ENCODE measurements at regions of chr15 and their contacts with region 1.

Region 1: DNA sequence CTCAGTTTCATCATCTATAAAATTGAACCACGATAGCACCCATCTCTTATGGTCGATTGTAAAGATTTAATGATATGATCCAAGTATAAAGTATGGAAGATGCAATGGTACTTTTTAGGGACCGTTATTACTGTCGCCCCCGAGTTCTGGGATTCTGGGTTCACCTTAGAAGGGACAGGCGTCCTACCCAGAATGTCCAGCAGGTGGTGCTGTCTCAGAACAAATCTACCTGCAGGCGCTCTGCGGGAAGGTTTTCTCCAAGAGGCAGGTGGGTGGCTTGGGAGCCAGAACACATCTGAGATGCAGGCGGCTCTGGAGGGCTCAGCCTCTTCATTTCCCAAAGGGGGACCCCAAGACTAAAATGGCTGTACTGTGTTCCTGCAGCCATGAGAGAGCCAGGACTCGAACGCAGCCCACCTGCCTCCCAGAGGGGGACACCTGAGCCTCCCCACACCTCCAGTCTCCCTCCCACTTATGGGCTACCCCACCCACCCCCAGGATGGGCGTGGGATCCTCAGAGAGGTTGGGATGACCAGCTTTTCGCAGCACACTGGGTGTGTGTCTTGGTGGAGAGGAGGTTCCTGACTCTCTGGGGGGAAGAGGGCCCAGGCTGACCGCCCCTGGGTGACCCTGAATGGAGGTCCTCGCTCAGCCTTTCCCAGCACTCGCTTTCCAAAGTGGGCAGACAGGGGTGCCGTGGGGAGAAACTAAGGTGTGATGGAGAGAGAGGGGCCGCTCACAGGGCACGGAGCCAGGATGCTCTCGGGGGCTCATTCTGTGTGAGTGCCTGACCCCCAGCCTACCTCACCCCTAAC is 28.1 kb upstream of the CORO2B start:
- DNase-seq: peak; percentile 80
- ATAC-seq: peak; percentile 58
- H3K4me3 ChIP-seq: no peak overlapping the region
- H3K4me3 Mint-ChIP-seq: no peak overlapping the region
- H3K27ac ChIP-seq: no peak overlapping the region
- H3K27ac Mint-ChIP-seq: no peak overlapping the region
- H3K4me1 ChIP-seq: no peaks in the 10 kb centered on the region
- H3K4me1 Mint-ChIP-seq: no peaks in the 10 kb centered on the region
- H3K27me3 ChIP-seq: peaks cover 0 to 25% (median 12%) of the 10 kb centered on the region in 4 experiments
- H3K27me3 Mint-ChIP-seq: peaks cover 46% of the 10 kb centered on the region
- CTCF ChIP-seq: peak; percentile 92

Region 2: DNA sequence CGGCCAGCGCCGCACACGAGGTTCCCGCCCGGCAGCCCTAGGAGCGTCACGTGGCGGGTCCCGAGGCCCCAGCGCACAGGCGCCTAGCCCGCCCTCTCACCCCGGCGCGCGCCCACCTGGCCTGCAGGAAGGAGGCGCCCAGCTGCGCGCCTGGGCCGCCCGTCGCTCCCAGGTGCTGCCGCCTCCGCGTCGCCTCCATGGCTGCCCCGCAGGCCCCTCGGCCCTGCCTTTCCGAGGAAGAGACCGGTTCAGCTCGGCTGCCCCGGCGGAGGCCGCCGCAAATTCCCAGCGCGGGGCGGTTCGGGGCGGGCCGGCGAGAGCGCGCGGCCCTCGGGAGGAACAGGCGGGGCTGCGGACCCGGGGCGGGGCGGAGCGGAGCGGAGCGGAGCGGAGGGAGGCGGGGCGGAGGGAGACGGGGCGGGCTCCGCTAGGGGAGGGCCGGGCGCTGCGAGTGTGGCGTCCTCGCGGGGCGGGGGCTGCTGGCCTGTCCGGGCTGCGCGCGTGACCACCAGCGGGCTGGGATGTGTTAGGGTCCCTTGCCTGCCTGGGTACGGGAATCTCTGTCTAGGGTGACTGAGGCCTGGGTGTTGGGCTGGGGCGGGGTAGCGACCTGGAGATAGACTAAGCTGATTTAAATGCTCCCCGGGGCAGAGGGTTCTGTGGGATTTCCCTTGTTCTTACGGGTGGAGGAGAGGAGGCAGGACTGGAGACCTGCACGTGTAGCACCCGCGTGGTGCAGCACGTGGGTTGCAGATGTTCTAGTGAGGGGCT is 321.1 kb before region 1 on chr15 and contains the start of gene CLN6:
- CTCF ChIA-PET with region 1: no interaction called
- POLR2A ChIA-PET with region 1: no interaction called
- intact Hi-C with region 1: no loop called
- DNase-seq: peak; percentile 93
- ATAC-seq: peak; percentile 87
- H3K4me3 ChIP-seq: peak within 1 kb of the TSS; percentile 57 to 76 (median 73)
- H3K4me3 Mint-ChIP-seq: peak within 1 kb of the TSS; percentile 96
- H3K27ac ChIP-seq: peak within 1 kb of the TSS; percentile 60 to 88
- H3K27ac Mint-ChIP-seq: peak within 1 kb of the TSS; percentile 92
- H3K4me1 ChIP-seq: peaks cover 23 to 42% of the 10 kb centered on the region in 2 donors
- H3K4me1 Mint-ChIP-seq: peaks cover 45% of the 10 kb centered on the region
- H3K27me3 ChIP-seq: peaks cover 0 to 2% (median 0%) of the 10 kb centered on the region in 4 experiments
- H3K27me3 Mint-ChIP-seq: no peaks in the 10 kb centered on the region
- CTCF ChIP-seq: no peak
- total RNA-seq, gene CLN6: 22.8 and 31.5 TPM in 2 replicates

Region 3: DNA sequence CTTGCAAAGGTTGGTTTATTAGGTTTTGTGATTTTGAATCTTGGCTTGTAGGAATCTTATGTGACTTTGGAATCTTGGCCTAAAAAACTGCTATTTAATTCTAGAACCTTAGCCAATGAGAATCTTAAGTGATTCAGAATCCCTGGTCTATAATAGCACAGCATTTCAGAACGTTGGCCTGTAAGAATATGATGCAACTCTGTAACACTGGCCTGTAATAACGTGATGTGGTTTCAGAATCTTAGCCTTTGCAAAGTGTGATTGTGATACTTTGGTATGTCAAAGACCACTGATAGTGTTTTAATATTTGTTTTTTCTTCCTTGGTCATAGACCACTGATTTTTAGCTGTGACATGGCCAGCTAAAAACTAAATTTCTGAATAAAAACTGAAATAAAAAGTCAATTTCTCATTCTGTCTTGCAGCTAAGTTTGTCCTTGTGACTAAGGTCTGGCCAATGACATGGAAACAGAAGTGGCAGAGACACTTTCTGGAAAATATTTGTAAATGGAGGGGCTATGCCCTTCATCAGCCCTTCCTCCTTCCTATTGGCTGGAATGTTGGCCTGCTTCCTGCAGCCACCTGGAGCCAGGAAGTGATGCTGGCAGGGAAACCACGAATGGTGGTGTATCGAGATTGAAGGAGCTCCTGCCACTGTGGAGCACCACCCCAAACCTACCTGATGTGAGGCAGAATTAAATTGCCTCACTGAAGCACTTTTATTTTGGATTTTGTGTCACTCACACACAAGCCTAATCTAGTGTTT is 14.2 kb before region 1 on chr15:
- CTCF ChIA-PET with region 1: interaction called, 24 read pairs
- POLR2A ChIA-PET with region 1: no interaction called
- intact Hi-C with region 1: no loop called
- DNase-seq: no peak
- ATAC-seq: no peak
- H3K4me3 ChIP-seq: no peak overlapping the region
- H3K4me3 Mint-ChIP-seq: no peak overlapping the region
- H3K27ac ChIP-seq: no peak overlapping the region
- H3K27ac Mint-ChIP-seq: no peak overlapping the region
- H3K4me1 ChIP-seq: no peaks in the 10 kb centered on the region
- H3K4me1 Mint-ChIP-seq: no peaks in the 10 kb centered on the region
- H3K27me3 ChIP-seq: peaks cover 0 to 3% (median 0%) of the 10 kb centered on the region in 4 experiments
- H3K27me3 Mint-ChIP-seq: no peaks in the 10 kb centered on the region
- CTCF ChIP-seq: no peak

Region 4: GRCh38 chr15:68783226-68784058 is 232.8 kb after region 1 on chr15:
- CTCF ChIA-PET with region 1: interaction called, 11 read pairs
- POLR2A ChIA-PET with region 1: no interaction called
- intact Hi-C with region 1: loop called (anchors 2 kb)
- DNase-seq: peak; percentile 74
- ATAC-seq: peak; percentile 84
- H3K4me3 ChIP-seq: no peak overlapping the region
- H3K4me3 Mint-ChIP-seq: no peak overlapping the region
- H3K27ac ChIP-seq: peak overlapping the region in 1 of 2 donors; percentile 10
- H3K27ac Mint-ChIP-seq: peak overlapping the region; percentile 50
- H3K4me1 ChIP-seq: peaks cover 30 to 32% of the 10 kb centered on the region in 2 donors
- H3K4me1 Mint-ChIP-seq: peaks cover 32% of the 10 kb centered on the region
- H3K27me3 ChIP-seq: no peaks in the 10 kb centered on the region
- H3K27me3 Mint-ChIP-seq: no peaks in the 10 kb centered on the region
- CTCF ChIP-seq: peak; percentile 82

Region 5: GRCh38 chr15:68875377-68876116 is 324.9 kb after region 1 on chr15:
- CTCF ChIA-PET with region 1: interaction called, 243 read pairs
- POLR2A ChIA-PET with region 1: interaction called, 3 read pairs
- intact Hi-C with region 1: loop called (anchors 1 kb)
- DNase-seq: peak; percentile 90
- ATAC-seq: peak; percentile 75
- H3K4me3 ChIP-seq: no peak overlapping the region
- H3K4me3 Mint-ChIP-seq: peak overlapping the region; percentile 50
- H3K27ac ChIP-seq: no peak overlapping the region
- H3K27ac Mint-ChIP-seq: no peak overlapping the region
- H3K4me1 ChIP-seq: peaks cover 4% of the 10 kb centered on the region in 2 donors
- H3K4me1 Mint-ChIP-seq: peaks cover 3% of the 10 kb centered on the region
- H3K27me3 ChIP-seq: peaks cover 0 to 16% (median 8%) of the 10 kb centered on the region in 4 experiments
- H3K27me3 Mint-ChIP-seq: peaks cover 19% of the 10 kb centered on the region
- CTCF ChIP-seq: peak; percentile 85

Region 6: DNA sequence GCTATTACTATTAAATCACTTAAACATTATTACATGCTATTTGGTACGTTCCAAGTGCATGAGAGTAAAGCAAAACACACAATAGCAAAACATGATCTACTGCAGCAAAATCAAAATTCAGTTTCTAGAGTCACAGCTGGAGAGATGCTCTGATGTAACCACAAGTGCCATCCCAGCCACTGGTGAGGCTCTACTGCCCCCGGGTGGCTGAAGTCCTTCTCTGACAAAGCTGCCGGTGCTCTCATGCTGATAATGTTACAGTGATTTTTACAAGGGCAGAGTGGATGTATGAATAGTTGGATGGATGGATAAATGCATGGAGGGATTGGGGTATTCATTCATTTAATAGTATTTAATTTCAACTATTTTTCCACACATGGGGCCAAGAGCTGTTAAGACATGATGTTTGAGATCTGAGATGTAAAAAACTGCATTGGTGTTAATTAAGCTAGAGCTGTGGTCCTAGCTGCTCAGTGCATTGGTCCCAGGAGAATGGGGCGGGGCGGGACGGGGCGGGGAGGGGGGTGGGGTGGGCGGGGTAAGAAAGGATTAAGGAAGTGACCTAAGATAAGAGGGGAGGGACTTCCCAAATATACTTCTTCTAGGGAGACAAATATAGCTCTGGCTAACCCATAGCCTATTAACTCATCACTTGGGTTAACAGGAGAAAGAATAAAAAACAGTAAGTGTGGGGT is 374.3 kb after region 1 on chr15:
- CTCF ChIA-PET with region 1: interaction called, 33 read pairs
- POLR2A ChIA-PET with region 1: no interaction called
- intact Hi-C with region 1: no loop called
- DNase-seq: peak; percentile 61
- ATAC-seq: peak; percentile 41
- H3K4me3 ChIP-seq: no peak overlapping the region
- H3K4me3 Mint-ChIP-seq: no peak overlapping the region
- H3K27ac ChIP-seq: no peak overlapping the region
- H3K27ac Mint-ChIP-seq: no peak overlapping the region
- H3K4me1 ChIP-seq: no peaks in the 10 kb centered on the region
- H3K4me1 Mint-ChIP-seq: peaks cover 3% of the 10 kb centered on the region
- H3K27me3 ChIP-seq: no peaks in the 10 kb centered on the region
- H3K27me3 Mint-ChIP-seq: peaks cover 9% of the 10 kb centered on the region
- CTCF ChIP-seq: peak; percentile 76